Naive thymus-derived CD4-positive, alpha-beta T cell (primary cell): ENCODE measurements at regions of chr22 and their contacts with region 1.

Region 1: GRCh38 chr22:23767673-23768548 is at the start of gene CHCHD10:
- DNase-seq: peak; percentile 63 to 84 (median 75)
- ATAC-seq: peak; percentile 80
- H3K4me3 ChIP-seq: peak within 1 kb of the TSS; percentile 92
- H3K4me3 Mint-ChIP-seq: peak within 1 kb of the TSS; percentile 63 to 88 (median 83)
- H3K27ac ChIP-seq: peak within 1 kb of the TSS; percentile 85
- H3K27ac Mint-ChIP-seq: peak within 1 kb of the TSS in 8 of 9 donors; percentile 42 to 82 (median 64)
- H3K4me1 ChIP-seq: peaks cover 27 to 37% of the 10 kb centered on the region in 2 donors
- H3K4me1 Mint-ChIP-seq: peaks cover 3 to 52% (median 38%) of the 10 kb centered on the region in 7 donors
- H3K27me3 ChIP-seq: no peaks in the 10 kb centered on the region
- H3K27me3 Mint-ChIP-seq: peaks cover 0 to 4% (median 0%) of the 10 kb centered on the region in 5 donors
- total RNA-seq, gene CHCHD10: 38.2 to 56.1 (median 46.4) TPM

Region 2: DNA sequence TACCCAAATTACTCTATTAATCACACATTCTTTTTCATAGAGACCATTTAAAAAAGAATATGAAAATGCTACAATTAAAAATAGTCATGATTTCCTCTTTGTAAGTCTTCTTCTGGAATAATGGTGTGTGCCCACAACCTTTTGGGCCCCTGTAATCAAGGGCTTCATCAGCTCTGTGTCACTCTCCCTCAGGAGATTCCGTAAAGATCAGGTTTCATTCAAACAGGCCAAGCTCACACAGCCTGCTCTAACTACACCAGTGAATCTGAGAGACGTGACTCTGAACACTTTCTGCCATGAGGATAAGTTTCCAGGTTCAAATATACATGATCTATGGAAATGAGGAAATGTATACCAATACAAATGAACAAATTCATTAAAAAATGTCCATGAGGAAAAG is 145.3 kb before region 1 on chr22:
- CTCF ChIA-PET with region 1: no interaction called
- POLR2A ChIA-PET with region 1: interaction called, 3 read pairs
- intact Hi-C with region 1: loop called in 1 of 2 experiments (anchors 10 kb)
- DNase-seq: no peak
- ATAC-seq: no peak
- H3K4me3 ChIP-seq: no peak overlapping the region
- H3K4me3 Mint-ChIP-seq: no peak overlapping the region
- H3K27ac ChIP-seq: no peak overlapping the region
- H3K27ac Mint-ChIP-seq: no peak overlapping the region
- H3K4me1 ChIP-seq: no peaks in the 10 kb centered on the region
- H3K4me1 Mint-ChIP-seq: peaks cover 0 to 4% (median 3%) of the 10 kb centered on the region in 7 donors
- H3K27me3 ChIP-seq: no peaks in the 10 kb centered on the region
- H3K27me3 Mint-ChIP-seq: peaks cover 0 to 4% (median 0%) of the 10 kb centered on the region in 5 donors

Region 3: GRCh38 chr22:23750714-23751440 is 17.0 kb before region 1 on chr22 and contains the start of gene ZNF70:
- CTCF ChIA-PET with region 1: interaction called, 4 read pairs
- POLR2A ChIA-PET with region 1: interaction called, 9 read pairs
- intact Hi-C with region 1: loop called (anchors 1 to 2 kb)
- DNase-seq: peak; percentile 78 to 88 (median 86)
- ATAC-seq: peak; percentile 99
- H3K4me3 ChIP-seq: peak within 1 kb of the TSS; percentile 79
- H3K4me3 Mint-ChIP-seq: peak within 1 kb of the TSS; percentile 63 to 88 (median 82)
- H3K27ac ChIP-seq: peak within 1 kb of the TSS; percentile 73
- H3K27ac Mint-ChIP-seq: peak within 1 kb of the TSS; percentile 37 to 91 (median 76)
- H3K4me1 ChIP-seq: peaks cover 0 to 9% of the 10 kb centered on the region in 2 donors
- H3K4me1 Mint-ChIP-seq: peaks cover 11 to 18% (median 13%) of the 10 kb centered on the region in 7 donors
- H3K27me3 ChIP-seq: no peaks in the 10 kb centered on the region
- H3K27me3 Mint-ChIP-seq: no peaks in the 10 kb centered on the region
- total RNA-seq, gene ZNF70: 3.1 to 7.9 (median 4.0) TPM